CD8-positive, alpha-beta T cell (primary cell): ENCODE measurements at regions of chr10 and their contacts with region 1.

Region 1: GRCh38 chr10:3197348-3198003 is 24.9 kb upstream of the PITRM1 start:
- DNase-seq: peak; percentile 15 to 83 (median 68)
- ATAC-seq: peak; percentile 90
- H3K4me3 ChIP-seq: peak overlapping the region; percentile 26 to 37
- H3K4me3 Mint-ChIP-seq: peak overlapping the region; percentile 79
- H3K27ac ChIP-seq: no peak overlapping the region
- H3K27ac Mint-ChIP-seq: peak overlapping the region; percentile 66
- H3K4me1 ChIP-seq: peaks cover 12% of the 10 kb centered on the region
- H3K4me1 Mint-ChIP-seq: peaks cover 19% of the 10 kb centered on the region
- H3K27me3 ChIP-seq: peaks cover 0 to 8% of the 10 kb centered on the region in 2 experiments
- H3K27me3 Mint-ChIP-seq: peaks cover 31% of the 10 kb centered on the region
- CTCF ChIP-seq: peak; percentile 57

Region 2: DNA sequence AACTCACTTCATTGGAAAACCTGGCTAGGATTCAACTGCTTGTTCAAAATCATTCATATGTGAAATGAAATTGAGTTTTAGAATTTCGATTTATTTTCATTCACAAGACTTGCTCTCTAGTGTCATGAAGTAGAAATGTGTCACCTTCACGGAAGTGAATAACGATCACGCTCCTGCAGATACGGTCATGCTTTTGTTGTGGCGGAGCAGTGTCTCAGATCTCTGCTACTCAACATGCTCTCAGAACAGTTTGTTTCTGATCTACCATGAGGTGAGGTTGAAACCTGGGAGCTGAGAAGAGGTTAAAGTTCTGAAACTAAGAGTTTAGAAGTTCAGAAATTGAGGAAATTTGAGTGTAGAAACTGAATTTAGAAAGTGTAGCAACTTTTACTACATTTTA is 11.1 kb before region 1 on chr10:
- CTCF ChIA-PET with region 1: interaction called, 15 read pairs
- POLR2A ChIA-PET with region 1: no interaction called
- intact Hi-C with region 1: no loop called
- DNase-seq: peak in 7 of 9 experiments; percentile 25 to 72 (median 50)
- ATAC-seq: peak; percentile 100
- H3K4me3 ChIP-seq: no peak overlapping the region
- H3K4me3 Mint-ChIP-seq: peak overlapping the region; percentile 30
- H3K27ac ChIP-seq: no peak overlapping the region
- H3K27ac Mint-ChIP-seq: peak overlapping the region; percentile 74
- H3K4me1 ChIP-seq: peaks cover 4% of the 10 kb centered on the region
- H3K4me1 Mint-ChIP-seq: peaks cover 13% of the 10 kb centered on the region
- H3K27me3 ChIP-seq: no peaks in the 10 kb centered on the region
- H3K27me3 Mint-ChIP-seq: no peaks in the 10 kb centered on the region
- CTCF ChIP-seq: no peak

Region 3: DNA sequence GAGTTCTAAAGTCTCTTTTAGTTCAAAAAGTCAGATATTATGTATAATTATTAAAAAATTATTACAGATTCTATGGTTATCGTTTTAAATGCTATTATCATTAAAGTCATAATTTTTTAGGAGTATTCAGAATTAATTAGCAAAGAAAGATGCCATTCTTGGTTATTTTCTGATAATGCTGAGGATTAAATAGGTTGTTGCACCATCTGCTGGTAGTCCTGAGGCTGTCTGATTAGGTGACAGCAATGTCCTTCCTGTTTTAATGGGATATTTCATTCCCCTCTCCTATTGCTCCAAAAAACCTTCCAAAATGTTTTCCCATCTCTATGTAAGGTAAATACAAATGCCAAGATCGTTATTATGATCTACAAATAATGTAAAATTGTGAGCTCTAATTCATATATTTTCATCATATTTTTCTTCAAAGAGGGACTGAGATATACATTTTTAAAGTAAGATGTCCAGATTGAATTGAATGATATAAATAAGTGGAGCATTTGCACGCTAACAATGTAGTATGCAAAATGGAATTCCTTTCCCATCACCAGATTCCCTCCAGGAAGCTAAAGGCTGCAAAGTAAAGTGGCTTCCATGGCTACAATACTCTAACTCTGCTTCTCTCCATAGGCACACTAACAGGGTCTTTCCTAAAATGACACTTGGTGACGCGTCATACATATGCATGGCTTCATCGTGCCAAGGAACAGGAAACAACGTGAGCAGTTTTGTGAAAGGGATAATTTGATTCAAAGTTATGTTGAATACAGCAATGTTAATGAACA is 1569.7 kb after region 1 on chr10:
- CTCF ChIA-PET with region 1: interaction called, 8 read pairs
- POLR2A ChIA-PET with region 1: no interaction called
- intact Hi-C with region 1: loop called in 1 of 2 experiments (anchors 1 kb)
- DNase-seq: peak in 2 of 9 experiments; percentile 42 to 48
- ATAC-seq: no peak
- H3K4me3 ChIP-seq: no peak overlapping the region
- H3K4me3 Mint-ChIP-seq: no peak overlapping the region
- H3K27ac ChIP-seq: no peak overlapping the region
- H3K27ac Mint-ChIP-seq: no peak overlapping the region
- H3K4me1 ChIP-seq: no peaks in the 10 kb centered on the region
- H3K4me1 Mint-ChIP-seq: no peaks in the 10 kb centered on the region
- H3K27me3 ChIP-seq: peaks cover 0 to 2% of the 10 kb centered on the region in 2 experiments
- H3K27me3 Mint-ChIP-seq: peaks cover 15% of the 10 kb centered on the region
- CTCF ChIP-seq: peak; percentile 39